Activated naive CD4-positive, alpha-beta T cell treated with anti-CD3 and anti-CD28 coated beads for 36 hours (primary cell): ENCODE measurements at regions of chr11 and their contacts with region 1.

Region 1: DNA sequence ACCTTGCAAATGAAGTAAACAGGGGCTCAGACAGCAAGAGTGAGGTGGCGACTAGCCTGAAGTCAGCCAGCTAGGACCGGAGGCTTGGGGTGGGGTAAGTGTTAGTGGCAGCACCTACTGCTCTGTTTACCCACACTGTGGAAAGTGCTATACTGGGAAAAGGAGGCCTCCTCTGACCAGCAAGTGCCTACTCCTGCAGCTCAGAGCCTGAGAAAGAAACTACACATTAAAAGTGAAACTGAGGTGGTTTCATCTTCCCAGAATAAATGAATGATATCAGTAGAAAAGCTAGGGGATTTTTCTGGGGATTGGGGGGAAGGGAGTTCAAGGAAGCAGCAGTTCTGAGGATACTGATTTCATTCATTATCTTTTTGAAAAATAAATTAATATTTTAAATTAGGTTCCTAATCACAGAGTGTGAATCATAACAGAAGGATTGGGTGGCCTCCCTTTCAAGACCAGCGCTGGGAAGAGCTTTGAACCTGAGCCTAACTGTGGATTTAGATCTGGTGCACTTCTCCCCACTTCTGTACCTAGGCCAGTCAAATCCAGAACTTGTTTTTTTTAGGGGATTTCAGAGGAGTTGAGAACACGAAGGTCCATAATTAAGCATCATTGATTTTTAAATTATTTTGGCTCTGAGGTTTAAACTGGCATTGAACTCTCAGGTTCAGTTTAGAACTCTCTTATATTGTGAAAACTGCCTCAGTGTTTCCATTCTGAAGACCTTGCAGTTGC is 48.1 kb upstream of the GRAMD1B start:
- DNase-seq: peak; percentile 85
- H3K4me3 Mint-ChIP-seq: peak overlapping the region; percentile 58
- H3K27ac Mint-ChIP-seq: peak overlapping the region; percentile 78
- H3K4me1 Mint-ChIP-seq: peaks cover 18% of the 10 kb centered on the region
- H3K27me3 Mint-ChIP-seq: peaks cover 6% of the 10 kb centered on the region

Region 2: DNA sequence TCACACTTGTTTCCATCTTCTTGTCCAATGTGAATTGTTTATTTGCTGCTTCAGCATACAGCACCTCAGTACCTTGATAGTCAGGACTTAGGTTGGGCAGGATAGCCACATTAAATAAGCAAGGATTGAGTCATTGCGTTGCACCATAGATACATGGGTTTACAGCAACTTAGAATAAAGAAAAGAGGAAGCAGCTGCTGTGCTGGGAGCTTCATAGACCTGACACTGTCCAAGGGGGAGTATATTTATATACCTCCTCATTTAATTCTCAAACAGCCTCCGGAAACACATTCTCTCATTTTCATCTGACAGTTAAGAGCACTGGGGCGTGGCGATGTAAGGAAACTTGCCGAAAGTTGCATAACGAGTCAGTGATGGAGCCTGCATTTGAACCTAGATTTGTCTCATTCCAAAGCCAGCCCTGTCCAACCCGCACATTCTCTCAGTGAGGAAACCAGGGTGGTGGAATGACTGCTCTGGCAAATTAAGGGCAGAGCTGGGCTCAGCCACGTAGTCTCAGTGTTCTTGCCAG is 684.3 kb before region 1 on chr11:
- CTCF ChIA-PET with region 1: no interaction called
- intact Hi-C with region 1: loop called (anchors 5 kb)
- DNase-seq: peak; percentile 77
- H3K4me3 Mint-ChIP-seq: peak overlapping the region; percentile 50
- H3K27ac Mint-ChIP-seq: peak overlapping the region; percentile 78
- H3K4me1 Mint-ChIP-seq: peaks cover 77% of the 10 kb centered on the region
- H3K27me3 Mint-ChIP-seq: no peaks in the 10 kb centered on the region

Region 3: DNA sequence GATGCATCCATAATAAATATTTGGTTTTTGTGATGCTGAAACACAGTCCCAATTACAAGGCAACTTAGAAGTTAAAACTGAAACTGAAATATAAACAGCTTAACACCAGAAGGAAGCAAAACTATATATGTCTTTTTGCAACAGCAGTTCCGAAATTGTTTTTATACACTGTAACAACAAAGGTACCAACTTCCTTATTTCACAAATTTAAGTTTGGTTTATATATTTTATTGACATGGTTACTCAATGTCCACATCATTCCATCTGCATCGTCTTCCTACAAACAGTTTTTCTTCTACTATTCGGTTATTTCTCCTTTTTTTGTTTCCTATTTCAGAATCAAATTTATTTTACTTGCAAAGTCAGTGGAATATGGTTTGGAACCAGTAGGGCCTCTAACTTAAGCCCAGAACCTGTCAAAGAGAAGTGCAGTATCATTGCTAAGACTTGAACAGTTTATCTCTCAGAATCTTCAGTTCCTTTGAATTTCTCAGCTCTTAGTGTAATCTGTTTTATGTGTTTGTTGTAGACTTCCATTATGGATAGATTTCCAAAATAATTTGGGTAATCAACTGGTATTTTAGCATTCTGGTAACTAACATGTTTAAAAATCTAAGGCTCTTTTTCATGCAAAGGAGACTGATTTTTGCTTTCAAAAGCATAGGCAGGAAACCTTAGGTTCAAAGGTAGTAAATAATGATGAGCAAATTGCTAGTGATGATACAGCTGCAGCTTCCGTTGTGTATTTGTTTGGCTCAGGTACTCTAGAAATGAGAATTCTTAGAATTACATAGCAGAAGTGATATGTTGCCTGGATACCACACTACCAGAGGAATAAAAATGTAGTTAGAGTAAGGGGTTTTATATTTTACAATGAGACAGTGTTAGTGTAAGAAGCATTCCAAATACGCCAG is 311.8 kb before region 1 on chr11:
- CTCF ChIA-PET with region 1: no interaction called
- intact Hi-C with region 1: loop called (anchors 1 kb)
- DNase-seq: peak; percentile 46
- H3K4me3 Mint-ChIP-seq: peak overlapping the region; percentile 58
- H3K27ac Mint-ChIP-seq: peak overlapping the region; percentile 97
- H3K4me1 Mint-ChIP-seq: peaks cover 63% of the 10 kb centered on the region
- H3K27me3 Mint-ChIP-seq: no peaks in the 10 kb centered on the region

Region 4: DNA sequence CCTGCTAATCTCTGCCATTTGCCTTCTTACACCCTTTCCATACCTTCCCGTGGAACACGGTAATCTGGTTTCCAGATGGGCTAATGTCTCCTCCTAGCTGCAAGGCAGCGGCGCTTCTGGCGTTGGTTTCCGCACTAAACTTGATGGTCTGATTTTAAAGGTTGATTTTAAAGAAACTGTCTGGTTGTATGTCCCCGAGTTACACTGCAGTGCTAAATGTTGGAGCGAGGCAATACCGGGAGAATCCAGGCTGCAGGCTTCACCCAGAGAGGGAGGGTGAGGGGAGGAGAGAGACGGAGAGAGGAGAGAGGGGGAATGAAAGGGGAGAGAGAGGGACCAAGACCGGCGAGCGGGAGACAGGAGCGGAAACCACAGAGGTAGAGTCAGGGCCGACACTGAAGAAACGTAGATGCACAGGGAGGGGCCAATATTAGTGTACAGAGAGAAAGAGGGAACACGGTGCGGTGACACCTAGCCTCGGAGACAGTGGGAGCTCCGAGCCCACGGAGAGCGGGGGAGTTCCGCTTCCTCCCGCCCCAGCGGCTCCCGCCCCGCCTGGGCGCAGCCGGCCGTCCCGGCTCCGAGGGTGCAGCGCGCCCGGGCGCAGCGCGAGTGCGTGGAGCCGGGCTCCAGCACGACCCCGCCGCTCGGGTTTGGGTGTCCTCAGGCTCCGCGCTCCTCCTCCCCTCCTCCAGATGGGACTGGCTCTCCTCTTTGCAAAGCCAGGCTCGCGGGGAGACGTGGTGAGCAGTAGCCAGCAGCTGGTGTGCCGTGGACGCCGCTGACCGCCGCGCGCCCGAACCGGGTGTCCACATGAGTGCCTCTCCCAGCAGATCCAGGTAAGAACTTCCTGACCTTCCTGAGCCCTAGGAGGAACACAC is 23.8 kb before region 1 on chr11:
- CTCF ChIA-PET with region 1: interaction called, 35 read pairs
- intact Hi-C with region 1: loop called (anchors 1 kb)
- DNase-seq: peak; percentile 71
- H3K4me3 Mint-ChIP-seq: peak overlapping the region; percentile 87
- H3K27ac Mint-ChIP-seq: peak overlapping the region; percentile 77
- H3K4me1 Mint-ChIP-seq: peaks cover 42% of the 10 kb centered on the region
- H3K27me3 Mint-ChIP-seq: peaks cover 40% of the 10 kb centered on the region

Region 5: DNA sequence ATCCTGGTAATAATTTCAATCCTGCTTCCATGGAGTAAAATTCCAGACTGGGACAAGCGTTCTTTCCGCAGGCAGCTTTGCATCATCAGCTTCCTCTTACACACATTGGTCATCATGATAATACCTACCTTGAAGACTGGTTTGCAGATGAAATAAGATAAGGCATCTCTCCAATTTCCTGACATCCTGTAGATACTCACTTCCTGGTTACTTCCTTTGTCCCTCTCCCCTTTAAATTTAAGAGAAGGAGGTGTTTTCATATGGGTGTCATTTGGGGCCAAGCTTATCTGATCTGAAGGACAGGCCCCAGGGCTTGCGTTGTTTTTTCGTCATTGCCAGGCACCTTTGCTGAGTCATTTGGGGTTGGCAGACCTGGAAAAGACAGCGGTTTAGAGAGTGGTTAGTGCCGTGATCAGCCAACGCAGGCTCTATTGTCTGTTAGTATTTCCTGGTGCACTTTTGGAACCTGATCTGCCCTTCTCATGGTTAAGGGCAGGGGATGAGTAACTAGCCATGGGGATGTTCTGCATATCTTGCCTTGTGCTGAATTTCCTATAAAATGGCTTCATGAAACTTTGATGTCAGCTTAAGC is 72.2 kb after region 1 on chr11:
- CTCF ChIA-PET with region 1: no interaction called
- intact Hi-C with region 1: loop called (anchors 1 kb)
- DNase-seq: peak; percentile 93
- H3K4me3 Mint-ChIP-seq: peak overlapping the region; percentile 72
- H3K27ac Mint-ChIP-seq: peak overlapping the region; percentile 93
- H3K4me1 Mint-ChIP-seq: peaks cover 73% of the 10 kb centered on the region
- H3K27me3 Mint-ChIP-seq: no peaks in the 10 kb centered on the region

Region 6: GRCh38 chr11:123573286-123573685 is 191.3 kb after region 1 on chr11:
- CTCF ChIA-PET with region 1: no interaction called
- intact Hi-C with region 1: no loop called
- DNase-seq: no peak
- H3K4me3 Mint-ChIP-seq: no peak overlapping the region
- H3K27ac Mint-ChIP-seq: no peak overlapping the region
- H3K4me1 Mint-ChIP-seq: peaks cover 5% of the 10 kb centered on the region
- H3K27me3 Mint-ChIP-seq: peaks cover 2% of the 10 kb centered on the region